Activated CD8-positive, alpha-beta T cell treated with anti-CD3 and anti-CD28 coated beads, Interleukin-2, amount 10 ng/mL, durations not matched to agents 7 days and 5 days (primary cell): ENCODE measurements at regions of chr16 and their contacts with region 1.

Region 1: GRCh38 chr16:8868416-8869211 is at the start of gene CARHSP1:
- DNase-seq: peak; percentile 91
- ATAC-seq: peak; percentile 83
- H3K4me3 Mint-ChIP-seq: peak within 1 kb of the TSS; percentile 93
- H3K27ac Mint-ChIP-seq: peak within 1 kb of the TSS; percentile 94
- H3K4me1 Mint-ChIP-seq: peaks cover 57% of the 10 kb centered on the region
- H3K27me3 Mint-ChIP-seq: no peaks in the 10 kb centered on the region
- total RNA-seq, gene CARHSP1: 209 to 217 TPM

Region 2: DNA sequence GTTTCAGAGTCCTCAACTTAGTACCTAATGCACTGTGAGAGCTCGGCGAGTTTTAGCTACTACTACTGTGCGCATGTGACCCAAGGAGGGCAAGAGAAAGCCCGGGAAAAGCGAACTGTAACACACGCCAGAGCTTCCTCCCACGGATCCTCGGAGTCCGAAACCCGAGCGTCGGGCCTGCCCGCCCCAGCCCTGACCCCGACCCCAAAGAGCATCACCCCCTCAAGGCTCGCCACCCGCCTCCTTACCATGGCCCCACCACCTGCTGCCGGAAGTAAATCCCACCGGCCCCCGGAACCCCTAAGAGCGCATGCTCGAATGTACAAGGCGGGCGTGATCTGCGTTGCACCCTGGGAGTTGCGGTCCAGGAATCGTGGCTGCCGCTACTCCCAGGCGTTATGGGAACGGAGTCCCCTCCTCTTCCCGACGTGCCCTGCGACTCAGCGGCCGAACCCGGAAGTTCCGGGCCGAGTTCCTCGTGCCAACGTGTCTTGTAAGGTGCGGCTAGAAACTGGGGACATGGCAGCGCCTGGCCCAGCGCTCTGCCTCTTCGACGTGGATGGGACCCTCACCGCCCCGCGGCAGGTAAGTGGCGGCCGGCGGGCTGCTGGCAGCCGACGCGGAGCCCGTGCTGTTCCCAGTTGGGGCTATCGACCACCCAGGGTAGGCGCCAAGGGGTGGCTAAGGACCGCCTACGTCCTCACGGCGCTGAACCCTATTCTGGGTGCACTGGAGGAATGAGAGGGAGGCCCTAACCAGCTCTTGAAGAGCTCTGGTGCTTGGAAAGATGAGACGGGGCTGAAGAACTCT is 71.0 kb before region 1 on chr16 and contains the starts of genes PMM2 and TMEM186:
- CTCF ChIA-PET with region 1: interaction called, 4 read pairs
- POLR2A ChIA-PET with region 1: interaction called, 29 read pairs
- DNase-seq: peak; percentile 98
- ATAC-seq: peak; percentile 95
- H3K4me3 Mint-ChIP-seq: peak within 1 kb of the TSS; percentile 99
- H3K27ac Mint-ChIP-seq: peak within 1 kb of the TSS; percentile 95
- H3K4me1 Mint-ChIP-seq: peaks cover 36% of the 10 kb centered on the region
- H3K27me3 Mint-ChIP-seq: no peaks in the 10 kb centered on the region
- total RNA-seq, gene PMM2: 36.9 to 37.6 TPM
- total RNA-seq, gene TMEM186: 11.0 to 11.1 TPM

Region 3: DNA sequence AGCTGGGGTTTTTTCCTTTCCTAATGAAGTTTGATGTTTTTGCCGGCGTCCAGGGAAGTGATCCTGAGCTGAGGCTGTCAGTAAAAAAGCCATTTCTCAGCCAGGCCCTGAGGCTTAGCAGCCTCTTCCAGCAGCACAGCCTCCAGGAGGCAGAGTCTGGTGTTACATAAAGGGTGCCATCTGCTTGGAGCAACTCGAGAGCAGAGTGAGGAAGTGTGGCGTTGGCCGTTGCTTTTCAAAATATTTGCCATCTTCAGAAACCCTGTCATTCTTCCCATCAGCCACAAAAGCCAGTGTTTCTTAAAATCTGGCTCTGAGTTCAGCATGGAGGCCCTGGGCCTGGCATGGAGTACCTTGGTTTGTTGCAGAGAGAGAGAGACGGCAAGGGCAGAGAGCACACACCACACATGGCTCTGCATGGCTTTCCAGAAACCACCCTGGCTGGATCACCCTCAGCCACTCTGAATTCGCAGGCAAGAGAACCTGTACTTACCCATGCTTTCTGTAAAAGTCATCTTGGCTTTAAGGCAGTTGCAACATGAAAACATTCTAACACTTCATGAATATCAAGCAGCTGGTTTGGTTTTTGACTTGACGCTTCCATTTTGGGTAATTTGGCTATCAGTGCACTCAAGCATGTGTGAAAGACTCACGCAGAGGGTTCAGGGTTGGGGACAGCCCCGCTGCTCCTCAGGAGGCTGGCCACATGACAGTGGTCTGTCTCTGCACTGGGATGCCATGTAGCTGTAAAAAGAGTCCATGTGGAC is 49.9 kb before region 1 on chr16:
- CTCF ChIA-PET with region 1: interaction called, 6 read pairs
- POLR2A ChIA-PET with region 1: interaction called, 35 read pairs
- DNase-seq: no peak
- ATAC-seq: no peak
- H3K4me3 Mint-ChIP-seq: no peak overlapping the region
- H3K27ac Mint-ChIP-seq: peak overlapping the region; percentile 81
- H3K4me1 Mint-ChIP-seq: peaks cover 26% of the 10 kb centered on the region
- H3K27me3 Mint-ChIP-seq: no peaks in the 10 kb centered on the region

Region 4: GRCh38 chr16:8850279-8850885 is 18.2 kb before region 1 on chr16:
- CTCF ChIA-PET with region 1: interaction called, 6 read pairs
- POLR2A ChIA-PET with region 1: interaction called, 20 read pairs
- DNase-seq: no peak
- ATAC-seq: no peak
- H3K4me3 Mint-ChIP-seq: peak overlapping the region; percentile 34
- H3K27ac Mint-ChIP-seq: peak overlapping the region; percentile 86
- H3K4me1 Mint-ChIP-seq: peaks cover 45% of the 10 kb centered on the region
- H3K27me3 Mint-ChIP-seq: no peaks in the 10 kb centered on the region

Region 5: GRCh38 chr16:9090960-9091866 is 222.6 kb after region 1 on chr16 and contains the start of gene HAPSTR1:
- CTCF ChIA-PET with region 1: interaction called, 5 read pairs
- POLR2A ChIA-PET with region 1: interaction called, 14 read pairs
- DNase-seq: peak; percentile 100
- ATAC-seq: peak; percentile 90
- H3K4me3 Mint-ChIP-seq: peak within 1 kb of the TSS; percentile 100
- H3K27ac Mint-ChIP-seq: peak within 1 kb of the TSS; percentile 99
- H3K4me1 Mint-ChIP-seq: peaks cover 24% of the 10 kb centered on the region
- H3K27me3 Mint-ChIP-seq: no peaks in the 10 kb centered on the region
- total RNA-seq, gene HAPSTR1: 55.8 to 60.4 TPM